Activated T-helper 1 cell treated with anti-CD3 and anti-CD28 coated beads, Interleukin-12 subunit alpha, Interleukin-12 subunit beta, Interleukin-2, Interleukin-4 antibody, amounts not matched to agents 30 ng/mL and 10 ng/mL and 1 ng/mL, durations not matched to agents 14 hours and 24 hours and 36 hours (primary cell): ENCODE measurements at regions of chr11 and their contacts with region 1.

Region 1: DNA sequence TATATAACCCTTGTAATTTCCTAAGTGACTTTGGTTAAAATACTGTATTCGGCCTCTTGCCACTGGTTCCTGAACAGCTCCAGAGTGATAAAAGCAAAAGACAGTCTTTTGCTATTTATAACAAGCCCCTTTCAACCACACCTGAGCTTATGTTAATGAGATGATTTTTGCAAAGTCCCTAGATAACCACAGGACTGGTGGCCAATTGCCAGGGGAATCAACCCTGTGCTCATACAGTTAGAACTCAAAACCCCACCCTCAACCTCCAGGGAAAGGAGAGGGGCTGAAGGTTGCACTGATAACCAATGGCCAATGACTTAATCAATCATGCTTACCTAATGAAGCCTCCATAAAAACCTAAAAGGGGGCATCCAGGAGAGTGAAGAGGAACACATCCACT is 77.9 kb downstream of the SIK3 start:
- DNase-seq: no peak
- H3K4me3 Mint-ChIP-seq: no peak overlapping the region
- H3K27ac Mint-ChIP-seq: peak overlapping the region; percentile 40
- H3K4me1 Mint-ChIP-seq: peaks cover 58% of the 10 kb centered on the region
- H3K27me3 Mint-ChIP-seq: no peaks in the 10 kb centered on the region

Region 2: GRCh38 chr11:116986521-116987105 is 33.7 kb before region 1 on chr11:
- intact Hi-C with region 1: loop called (anchors 1 kb)
- DNase-seq: no peak
- H3K4me3 Mint-ChIP-seq: peak overlapping the region; percentile 65
- H3K27ac Mint-ChIP-seq: peak overlapping the region; percentile 73
- H3K4me1 Mint-ChIP-seq: peaks cover 70% of the 10 kb centered on the region
- H3K27me3 Mint-ChIP-seq: no peaks in the 10 kb centered on the region

Region 3: GRCh38 chr11:117002639-117003299 is 17.5 kb before region 1 on chr11:
- intact Hi-C with region 1: loop called (anchors 1 kb)
- DNase-seq: no peak
- H3K4me3 Mint-ChIP-seq: peak overlapping the region; percentile 26
- H3K27ac Mint-ChIP-seq: peak overlapping the region; percentile 81
- H3K4me1 Mint-ChIP-seq: peaks cover 62% of the 10 kb centered on the region
- H3K27me3 Mint-ChIP-seq: no peaks in the 10 kb centered on the region

Region 4: DNA sequence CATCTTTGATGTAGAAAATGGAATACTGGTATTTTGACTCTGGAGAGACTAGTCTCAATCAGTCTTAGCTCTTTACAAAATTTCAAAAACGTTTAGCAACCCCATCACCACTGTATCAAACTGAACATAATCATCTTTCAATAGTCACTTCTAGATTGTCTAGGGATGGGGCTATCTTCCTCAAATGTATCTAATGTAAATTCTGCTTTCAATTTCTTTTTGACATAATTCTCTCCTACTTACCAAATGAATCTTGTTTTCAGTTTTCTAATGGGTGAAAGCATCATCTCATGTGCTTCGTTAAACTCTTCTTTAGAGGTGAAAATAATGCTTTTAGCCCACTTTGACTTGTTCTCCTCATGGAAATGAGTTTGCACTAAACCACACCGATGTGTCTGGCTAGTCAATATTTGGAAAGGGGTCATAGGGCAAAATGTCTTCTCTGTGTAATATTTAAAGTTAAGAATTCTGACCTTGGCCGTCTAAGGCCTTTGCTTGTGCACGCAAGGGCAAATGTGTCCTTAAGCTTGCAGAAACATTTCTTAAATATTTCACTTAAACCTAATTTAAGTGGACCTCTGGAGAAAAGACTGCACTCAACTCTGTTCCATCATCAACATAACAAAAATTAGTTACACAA is 72.8 kb after region 1 on chr11:
- intact Hi-C with region 1: loop called (anchors 1 kb)
- DNase-seq: no peak
- H3K4me3 Mint-ChIP-seq: peak overlapping the region; percentile 53
- H3K27ac Mint-ChIP-seq: peak overlapping the region; percentile 81
- H3K4me1 Mint-ChIP-seq: peaks cover 77% of the 10 kb centered on the region
- H3K27me3 Mint-ChIP-seq: no peaks in the 10 kb centered on the region

Region 5: GRCh38 chr11:117098269-117099232 is 78.3 kb after region 1 on chr11 and contains the start of gene SIK3:
- intact Hi-C with region 1: loop called (anchors 1 kb)
- DNase-seq: peak; percentile 90
- H3K4me3 Mint-ChIP-seq: peak within 1 kb of the TSS; percentile 100
- H3K27ac Mint-ChIP-seq: peak within 1 kb of the TSS; percentile 99
- H3K4me1 Mint-ChIP-seq: peaks cover 50% of the 10 kb centered on the region
- H3K27me3 Mint-ChIP-seq: peaks cover 3% of the 10 kb centered on the region
- total RNA-seq, gene SIK3: 49.9 and 54.2 TPM in 2 replicates

Region 6: GRCh38 chr11:117408356-117408755 is 388.1 kb after region 1 on chr11:
- intact Hi-C with region 1: no loop called
- DNase-seq: no peak
- H3K4me3 Mint-ChIP-seq: no peak overlapping the region
- H3K27ac Mint-ChIP-seq: no peak overlapping the region
- H3K4me1 Mint-ChIP-seq: no peaks in the 10 kb centered on the region
- H3K27me3 Mint-ChIP-seq: no peaks in the 10 kb centered on the region